ENCODE measurements at regions of chr2 and their contacts with region 1.

Region 1: DNA sequence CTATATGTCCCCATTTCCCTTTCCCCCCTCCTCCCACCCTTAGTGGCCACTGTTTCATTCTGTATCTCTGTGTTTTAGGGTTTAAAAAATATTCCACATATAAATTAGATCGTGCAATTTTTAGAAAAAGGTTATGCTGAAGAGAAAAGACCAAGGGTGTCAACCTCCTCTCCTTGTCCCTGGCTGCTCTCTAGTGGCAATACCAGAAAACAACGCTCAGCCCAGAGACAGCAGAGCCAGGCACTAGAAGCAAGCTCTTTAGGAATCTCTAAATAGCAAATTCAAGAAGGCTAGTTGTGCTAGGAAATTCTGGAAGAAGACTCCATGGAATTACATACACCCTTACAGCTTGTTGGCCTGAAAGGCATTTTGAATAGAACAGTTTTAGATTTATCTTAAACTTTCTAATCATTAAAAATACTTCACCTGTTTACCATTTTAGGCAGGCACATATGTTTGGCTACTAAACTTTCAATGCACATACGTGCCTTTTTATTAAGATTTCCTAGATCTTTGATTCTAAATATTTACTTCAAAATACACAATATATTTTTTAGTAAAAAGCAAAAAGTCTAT is 35.1 kb upstream of the RASGRP3 start:
- H3K4me3 ChIP-seq: no peak overlapping the region
- H3K27ac ChIP-seq: no peak overlapping the region
- H3K4me1 ChIP-seq: no peaks in the 10 kb centered on the region
- CTCF ChIP-seq: peak; percentile 52; the same call in 1 of the 2 replicates

Region 2: DNA sequence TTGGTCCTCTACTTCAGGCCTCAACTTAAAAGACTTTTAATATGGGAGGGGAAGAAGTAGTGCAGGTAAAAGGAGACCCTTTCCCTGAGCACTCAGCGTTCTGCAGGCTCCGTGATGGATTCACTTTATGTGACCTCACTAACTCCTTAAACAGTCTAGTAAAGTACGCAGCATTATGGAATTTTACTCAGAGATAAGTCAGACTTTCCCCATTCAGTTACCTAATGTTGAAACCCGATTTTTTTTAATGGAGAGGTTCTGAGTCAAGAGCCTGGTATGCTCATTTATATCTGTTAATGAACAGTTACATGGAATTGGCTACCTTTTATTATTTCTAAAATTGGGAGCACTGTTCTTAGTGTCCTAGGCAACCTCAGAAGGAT is 69.3 kb after region 1 on chr2:
- CTCF ChIA-PET with region 1: no interaction called
- POLR2A ChIA-PET with region 1: no interaction called
- H3K4me3 ChIP-seq: no peak overlapping the region
- H3K27ac ChIP-seq: no peak overlapping the region
- H3K4me1 ChIP-seq: peaks cover 6% of the 10 kb centered on the region; the same call in 1 of the 2 replicates
- CTCF ChIP-seq: no peak

Region 3: GRCh38 chr2:33583194-33583938 is 142.0 kb after region 1 on chr2:
- CTCF ChIA-PET with region 1: interaction called, 21 read pairs
- POLR2A ChIA-PET with region 1: no interaction called
- H3K4me3 ChIP-seq: no peak overlapping the region
- H3K27ac ChIP-seq: no peak overlapping the region
- H3K4me1 ChIP-seq: no peaks in the 10 kb centered on the region
- CTCF ChIP-seq: peak; percentile 31; the same call in 1 of the 2 replicates

Region 4: GRCh38 chr2:33835911-33836310 is 394.6 kb after region 1 on chr2:
- CTCF ChIA-PET with region 1: no interaction called
- POLR2A ChIA-PET with region 1: no interaction called
- H3K4me3 ChIP-seq: no peak overlapping the region
- H3K27ac ChIP-seq: no peak overlapping the region
- H3K4me1 ChIP-seq: no peaks in the 10 kb centered on the region
- CTCF ChIP-seq: no peak